ENCODE measurements at regions of chr10 and their contacts with region 1.

Region 1: DNA sequence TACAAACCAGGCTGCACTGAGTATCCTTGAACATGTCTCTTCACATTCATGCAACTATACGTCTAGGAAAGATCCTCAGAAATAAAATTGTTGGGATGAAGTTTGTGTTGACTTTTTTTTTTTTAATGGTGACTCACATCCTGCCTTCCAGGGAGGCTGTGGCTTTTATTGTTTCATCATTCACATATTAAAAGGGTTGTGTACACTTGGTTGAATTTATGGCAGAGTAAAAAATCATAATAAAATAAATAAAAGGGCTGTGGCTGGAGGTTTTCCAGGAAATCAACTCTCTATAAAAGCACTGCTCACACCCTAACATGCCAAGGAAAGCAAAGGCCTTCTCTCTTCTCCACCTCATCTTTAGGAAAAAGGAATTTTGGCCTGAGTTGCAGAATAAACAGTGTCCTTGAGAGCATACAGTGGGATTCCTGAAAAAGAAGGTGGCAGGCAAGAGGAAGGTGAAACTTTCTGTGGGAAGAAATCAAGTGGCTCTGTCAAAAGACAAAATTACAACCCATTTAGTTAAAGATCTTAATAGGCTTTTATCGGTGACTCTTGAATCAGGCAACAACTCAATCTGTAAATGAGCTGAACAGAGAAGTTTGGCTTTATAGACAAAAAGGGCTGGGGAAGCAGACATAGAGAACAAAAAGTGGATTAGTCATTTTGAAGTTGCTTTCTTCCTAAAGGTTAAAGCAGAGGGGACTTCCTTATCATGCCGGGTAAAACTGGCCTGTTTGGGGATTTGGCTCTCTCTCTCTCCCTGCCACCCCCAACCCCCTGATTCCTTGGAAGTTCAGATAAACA is 41.6 kb upstream of the FHIP2A start:
- DNase-seq: no peak
- ATAC-seq: peak in 1 of 2 donors; percentile 44

Region 2: DNA sequence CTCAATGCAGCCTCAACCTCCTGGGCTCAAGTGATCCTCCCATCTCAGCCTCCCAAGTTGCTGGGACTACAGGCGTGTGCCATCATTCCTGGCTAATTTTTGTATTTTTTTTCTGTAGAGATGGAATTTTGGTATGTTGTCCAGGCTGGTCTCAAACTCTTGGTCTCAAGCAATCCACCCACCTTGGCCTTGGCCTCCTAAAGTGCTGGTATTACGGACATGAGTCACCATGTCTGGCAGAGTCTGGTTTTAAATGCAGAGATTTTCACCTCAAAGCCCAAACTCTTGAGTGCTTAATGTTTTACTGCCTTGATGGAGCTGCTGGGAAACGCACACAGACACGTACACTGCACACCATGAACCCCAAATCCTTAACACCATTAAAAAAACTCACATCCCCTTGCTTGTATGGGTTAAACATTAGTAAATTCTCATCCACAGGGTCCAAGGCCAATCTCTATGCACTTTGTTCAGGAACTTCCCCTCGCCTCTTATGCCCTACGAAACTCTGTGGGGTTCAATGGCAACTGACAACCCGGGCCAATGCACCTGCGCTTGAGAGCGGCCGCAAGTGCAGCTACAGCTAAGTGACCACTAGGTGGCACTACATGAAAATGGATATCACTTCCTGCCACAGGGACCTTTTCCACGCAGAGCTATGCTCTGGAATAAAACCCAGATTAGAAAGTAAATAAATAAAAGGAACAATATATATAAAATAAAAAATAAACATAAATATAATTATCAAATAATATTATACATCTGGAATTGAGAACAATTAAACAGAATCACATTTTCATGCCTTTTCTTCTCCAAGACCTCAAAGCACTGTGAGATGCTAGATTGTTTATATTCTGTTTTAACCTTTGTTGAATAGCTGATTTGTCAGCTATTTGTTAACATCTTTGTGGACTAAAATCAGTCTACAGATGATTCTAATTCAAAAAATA is 308.8 kb before region 1 on chr10:
- intact Hi-C with region 1: loop called in 1 of 2 experiments (anchors 5 kb)
- DNase-seq: peak; percentile 68
- ATAC-seq: peak; percentile 76 to 87

Region 3: GRCh38 chr10:114550756-114551635 is 229.0 kb before region 1 on chr10:
- intact Hi-C with region 1: loop called (anchors 2 to 10 kb)
- DNase-seq: peak; percentile 79
- ATAC-seq: peak; percentile 17 to 51

Region 4: DNA sequence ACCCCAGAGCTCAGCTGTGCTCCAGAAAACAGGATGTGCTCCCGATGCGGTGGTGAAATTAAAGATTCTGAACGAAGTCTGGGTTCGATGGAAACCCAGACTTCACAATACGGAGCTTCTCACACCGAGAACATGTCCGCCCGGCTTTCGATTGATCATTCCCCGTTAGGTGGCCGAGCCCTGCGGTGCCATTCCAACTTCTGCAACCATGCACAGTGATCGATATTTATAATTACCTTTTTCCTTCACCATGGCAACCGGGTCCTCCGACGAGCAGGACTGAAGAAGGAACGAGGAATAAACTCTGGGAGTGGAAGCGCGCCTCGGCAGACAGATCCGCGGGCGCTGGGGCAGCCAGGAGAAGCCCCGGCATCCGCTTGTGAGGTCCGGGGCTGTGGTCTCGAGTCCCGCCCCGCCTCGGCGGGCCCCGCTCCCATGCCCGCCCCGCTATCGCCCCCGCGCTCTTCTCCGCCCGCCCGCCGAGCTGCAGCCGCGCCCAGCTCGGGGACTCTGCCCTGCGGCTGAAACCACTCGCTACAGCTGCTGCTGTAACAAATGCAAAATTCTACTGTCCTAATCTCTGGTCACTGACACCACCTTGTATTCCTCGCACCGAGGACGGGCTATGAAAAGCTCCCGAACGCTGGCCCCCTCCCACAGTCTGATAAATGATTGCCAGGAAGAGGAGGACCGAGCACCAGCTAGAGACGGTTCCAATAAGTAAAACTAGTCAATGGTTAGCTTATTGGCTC is 148.2 kb before region 1 on chr10:
- intact Hi-C with region 1: loop called in 1 of 2 experiments (anchors 10 kb)
- DNase-seq: peak; percentile 53
- ATAC-seq: peak; percentile 53 to 61

Region 5: DNA sequence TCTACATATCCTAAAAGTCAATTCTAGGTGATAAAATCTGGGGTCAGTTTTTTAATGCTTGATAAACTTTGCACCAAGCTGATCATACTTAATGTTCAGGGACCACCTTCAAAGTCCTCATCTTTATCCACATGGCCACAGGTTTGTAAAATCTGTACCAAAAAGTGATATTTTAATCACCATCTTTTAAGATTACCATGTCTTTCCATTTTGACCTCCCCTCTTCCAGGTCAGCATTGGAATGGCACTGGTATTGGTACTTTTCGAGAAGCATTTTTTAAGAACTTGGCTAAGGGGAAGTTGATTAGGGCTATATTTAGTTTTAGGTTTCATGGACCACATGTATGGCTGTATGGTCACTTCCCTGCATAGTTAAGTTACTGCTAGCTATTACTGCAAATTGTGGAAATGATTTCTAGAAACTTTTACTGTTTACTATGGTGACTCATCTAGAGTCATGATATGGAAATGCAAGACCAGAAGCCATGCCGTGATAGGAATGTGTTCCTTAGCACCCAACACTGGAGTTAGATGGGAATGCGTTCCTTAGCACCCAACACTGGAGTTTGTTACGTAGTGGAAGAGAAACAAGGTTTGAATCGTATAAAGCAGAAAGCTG is 71.2 kb before region 1 on chr10:
- intact Hi-C with region 1: loop called (anchors 5 to 10 kb)
- DNase-seq: no peak
- ATAC-seq: no peak

Region 6: DNA sequence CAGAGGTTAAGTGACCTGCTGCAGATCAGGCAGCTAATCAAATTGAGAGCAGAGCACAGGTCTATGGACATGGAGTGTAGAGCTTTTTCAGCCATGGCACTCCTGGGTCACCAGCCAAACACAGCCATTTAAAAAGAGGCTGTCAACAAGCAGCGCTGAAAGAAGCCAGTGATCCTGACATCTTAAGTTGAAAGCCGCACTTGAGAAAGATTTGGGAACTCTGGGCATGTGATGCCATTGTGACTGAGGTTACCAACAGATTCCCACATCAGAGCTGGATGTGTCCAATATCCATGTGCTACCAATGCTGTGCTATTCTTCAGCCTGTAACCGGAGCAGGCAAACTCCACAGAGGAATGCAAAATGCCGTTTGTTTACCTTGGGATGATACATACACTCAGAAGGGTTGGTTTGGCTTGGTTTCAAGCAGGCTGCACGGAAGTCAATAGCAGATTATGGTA is 65.7 kb before region 1 on chr10:
- intact Hi-C with region 1: loop called (anchors 5 to 10 kb)
- DNase-seq: no peak
- ATAC-seq: peak; percentile 66 to 69

Measured in left cardiac atrium (tissue), 4 donors.